ENCODE measurements at regions of chr7 and their contacts with region 1.

Region 1: DNA sequence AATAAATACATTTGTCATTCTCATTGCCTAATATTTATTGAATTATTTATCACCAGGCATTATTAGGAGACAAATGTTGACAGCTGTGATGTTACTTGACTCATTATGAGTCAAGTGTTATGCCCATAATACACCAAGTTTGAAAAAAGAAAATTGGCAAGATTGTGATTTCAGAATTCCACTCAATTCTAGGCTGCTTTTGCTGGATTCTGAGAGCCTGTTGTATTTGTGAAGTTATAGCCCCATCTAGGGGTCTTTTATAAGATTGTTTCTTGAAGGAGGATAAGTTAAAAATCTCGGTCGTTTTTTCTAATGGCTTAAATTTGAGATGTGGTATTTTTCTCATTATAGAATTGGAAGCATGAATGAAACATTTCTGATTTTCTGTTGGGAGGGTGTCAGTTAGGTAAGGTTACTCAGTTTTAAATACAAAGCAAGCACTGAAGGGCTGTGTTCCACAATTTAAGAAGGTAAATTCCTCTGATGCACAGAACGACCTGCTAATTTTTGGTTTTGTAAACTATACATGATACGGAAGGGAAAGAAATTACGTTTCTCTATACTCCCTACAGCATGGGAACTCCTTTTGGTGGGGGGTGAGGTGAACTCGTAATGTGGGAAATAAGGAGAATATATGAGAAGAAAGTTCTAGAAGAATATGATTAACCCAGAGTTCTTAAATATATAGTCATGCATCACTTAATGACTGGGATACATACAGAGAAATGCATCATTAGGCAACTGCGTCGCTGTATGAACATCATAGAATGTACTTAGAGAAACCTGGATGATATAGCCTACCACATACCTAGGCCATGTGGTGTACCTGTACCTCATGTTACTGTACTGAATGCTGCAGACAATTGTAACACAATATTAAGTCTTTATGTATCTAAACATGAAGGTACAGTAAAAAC is 2.6 kb downstream of the STK31 start:
- DNase-seq: peak in 2 of 9 experiments; percentile 59 to 68
- ATAC-seq: no peak
- H3K4me3 ChIP-seq: no peak overlapping the region
- H3K4me3 Mint-ChIP-seq: no peak overlapping the region
- H3K27ac ChIP-seq: no peak overlapping the region
- H3K27ac Mint-ChIP-seq: no peak overlapping the region
- H3K4me1 ChIP-seq: no peaks in the 10 kb centered on the region
- H3K4me1 Mint-ChIP-seq: no peaks in the 10 kb centered on the region
- H3K27me3 ChIP-seq: no peaks in the 10 kb centered on the region
- H3K27me3 Mint-ChIP-seq: no peaks in the 10 kb centered on the region
- CTCF ChIP-seq: peak; percentile 74

Region 2: GRCh38 chr7:23357190-23358093 is 355.2 kb before region 1 on chr7:
- CTCF ChIA-PET with region 1: no interaction called
- POLR2A ChIA-PET with region 1: no interaction called
- intact Hi-C with region 1: loop called (anchors 1 to 2 kb)
- DNase-seq: peak in 2 of 9 experiments; percentile 26 to 51
- ATAC-seq: peak; percentile 36
- H3K4me3 ChIP-seq: no peak overlapping the region
- H3K4me3 Mint-ChIP-seq: no peak overlapping the region
- H3K27ac ChIP-seq: no peak overlapping the region
- H3K27ac Mint-ChIP-seq: no peak overlapping the region
- H3K4me1 ChIP-seq: peaks cover 4% of the 10 kb centered on the region
- H3K4me1 Mint-ChIP-seq: peaks cover 12% of the 10 kb centered on the region
- H3K27me3 ChIP-seq: peaks cover 0 to 8% of the 10 kb centered on the region in 2 experiments
- H3K27me3 Mint-ChIP-seq: peaks cover 12% of the 10 kb centered on the region
- CTCF ChIP-seq: peak; percentile 50

Region 3: GRCh38 chr7:23431702-23432199 is 280.9 kb before region 1 on chr7:
- CTCF ChIA-PET with region 1: no interaction called
- POLR2A ChIA-PET with region 1: no interaction called
- intact Hi-C with region 1: loop called in 1 of 2 experiments (anchors 2 kb)
- DNase-seq: no peak
- ATAC-seq: no peak
- H3K4me3 ChIP-seq: no peak overlapping the region
- H3K4me3 Mint-ChIP-seq: no peak overlapping the region
- H3K27ac ChIP-seq: no peak overlapping the region
- H3K27ac Mint-ChIP-seq: no peak overlapping the region
- H3K4me1 ChIP-seq: no peaks in the 10 kb centered on the region
- H3K4me1 Mint-ChIP-seq: no peaks in the 10 kb centered on the region
- H3K27me3 ChIP-seq: peaks cover 0 to 3% of the 10 kb centered on the region in 2 experiments
- H3K27me3 Mint-ChIP-seq: peaks cover 28% of the 10 kb centered on the region
- CTCF ChIP-seq: no peak

Region 4: GRCh38 chr7:23570592-23571200 is 141.9 kb before region 1 on chr7:
- CTCF ChIA-PET with region 1: interaction called, 67 read pairs
- POLR2A ChIA-PET with region 1: no interaction called
- intact Hi-C with region 1: loop called (anchors 1 kb)
- DNase-seq: peak; percentile 40 to 81 (median 66)
- ATAC-seq: peak; percentile 83
- H3K4me3 ChIP-seq: no peak overlapping the region
- H3K4me3 Mint-ChIP-seq: no peak overlapping the region
- H3K27ac ChIP-seq: no peak overlapping the region
- H3K27ac Mint-ChIP-seq: no peak overlapping the region
- H3K4me1 ChIP-seq: no peaks in the 10 kb centered on the region
- H3K4me1 Mint-ChIP-seq: no peaks in the 10 kb centered on the region
- H3K27me3 ChIP-seq: no peaks in the 10 kb centered on the region
- H3K27me3 Mint-ChIP-seq: peaks cover 16% of the 10 kb centered on the region
- CTCF ChIP-seq: peak; percentile 67

Region 5: GRCh38 chr7:23696916-23697441 is 15.6 kb before region 1 on chr7:
- CTCF ChIA-PET with region 1: interaction called, 58 read pairs
- POLR2A ChIA-PET with region 1: no interaction called
- intact Hi-C with region 1: no loop called
- DNase-seq: peak in 8 of 9 experiments; percentile 28 to 71 (median 60)
- ATAC-seq: peak; percentile 65
- H3K4me3 ChIP-seq: no peak overlapping the region
- H3K4me3 Mint-ChIP-seq: no peak overlapping the region
- H3K27ac ChIP-seq: no peak overlapping the region
- H3K27ac Mint-ChIP-seq: no peak overlapping the region
- H3K4me1 ChIP-seq: no peaks in the 10 kb centered on the region
- H3K4me1 Mint-ChIP-seq: no peaks in the 10 kb centered on the region
- H3K27me3 ChIP-seq: no peaks in the 10 kb centered on the region
- H3K27me3 Mint-ChIP-seq: no peaks in the 10 kb centered on the region
- CTCF ChIP-seq: peak; percentile 64